Mammary epithelial cell (primary cell): ENCODE measurements at regions of chr5 and their contacts with region 1.

Region 1: GRCh38 chr5:159163027-159163700 is 46.2 kb downstream of the RNF145 start:
- DNase-seq: peak; percentile 97
- H3K4me3 ChIP-seq: no peak overlapping the region
- H3K27ac ChIP-seq: peak overlapping the region; percentile 85
- H3K4me1 ChIP-seq: peaks cover 19% of the 10 kb centered on the region
- H3K27me3 ChIP-seq: no peaks in the 10 kb centered on the region
- CTCF ChIP-seq: no peak

Region 2: DNA sequence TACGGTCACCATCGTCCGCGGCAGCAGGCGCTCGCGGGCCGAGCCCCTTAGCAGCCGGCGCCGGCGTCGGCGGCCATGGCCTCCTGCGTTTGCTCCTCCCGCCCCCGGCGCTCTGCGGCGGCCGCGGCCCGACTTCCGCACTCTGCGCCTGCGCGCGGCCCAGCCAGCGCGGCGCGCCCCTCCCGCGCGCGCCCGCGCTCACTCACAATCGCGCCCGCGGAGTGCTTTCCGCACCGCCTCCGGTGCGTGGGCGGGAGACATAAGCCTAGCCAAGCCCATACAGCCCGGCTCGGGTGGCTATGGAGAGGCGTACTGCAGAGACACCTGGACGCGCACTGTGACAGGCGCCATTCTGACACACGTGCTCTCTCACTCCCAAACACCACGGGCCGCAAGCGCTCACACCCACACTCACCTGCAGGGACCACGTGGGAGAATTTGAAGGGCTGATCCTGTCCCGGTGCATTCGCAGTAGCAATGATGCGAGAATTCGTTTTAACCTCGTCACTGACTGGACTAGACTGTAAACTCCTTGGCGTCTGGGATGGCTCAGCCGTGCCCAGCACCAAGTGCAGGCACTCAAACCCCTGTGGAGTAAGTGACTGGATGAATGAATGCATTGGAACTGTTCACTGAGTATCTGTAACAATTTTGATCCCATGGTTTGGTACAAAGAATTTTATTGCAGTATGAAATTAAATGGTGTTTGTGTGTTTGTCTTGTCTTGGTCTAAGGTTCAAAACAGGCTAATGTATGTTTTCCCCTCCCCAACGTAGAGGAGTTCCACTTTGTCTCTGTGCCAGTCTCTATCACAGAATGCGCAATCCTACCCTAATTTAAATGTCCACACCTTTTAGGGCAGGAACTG is 46.5 kb after region 1 on chr5 and contains the start of gene RNF145:
- CTCF ChIA-PET with region 1: no interaction called
- dilution Hi-C with region 1: no loop called
- in situ Hi-C with region 1: no loop called
- intact Hi-C with region 1: loop called (anchors 1 kb)
- DNase-seq: peak; percentile 91
- H3K4me3 ChIP-seq: peak within 1 kb of the TSS; percentile 77 to 89 (median 79)
- H3K27ac ChIP-seq: peak within 1 kb of the TSS; percentile 90
- H3K4me1 ChIP-seq: peaks cover 20% of the 10 kb centered on the region
- H3K27me3 ChIP-seq: no peaks in the 10 kb centered on the region
- CTCF ChIP-seq: no peak
- total RNA-seq, gene RNF145: 63.2 to 78.9 TPM

Region 3: DNA sequence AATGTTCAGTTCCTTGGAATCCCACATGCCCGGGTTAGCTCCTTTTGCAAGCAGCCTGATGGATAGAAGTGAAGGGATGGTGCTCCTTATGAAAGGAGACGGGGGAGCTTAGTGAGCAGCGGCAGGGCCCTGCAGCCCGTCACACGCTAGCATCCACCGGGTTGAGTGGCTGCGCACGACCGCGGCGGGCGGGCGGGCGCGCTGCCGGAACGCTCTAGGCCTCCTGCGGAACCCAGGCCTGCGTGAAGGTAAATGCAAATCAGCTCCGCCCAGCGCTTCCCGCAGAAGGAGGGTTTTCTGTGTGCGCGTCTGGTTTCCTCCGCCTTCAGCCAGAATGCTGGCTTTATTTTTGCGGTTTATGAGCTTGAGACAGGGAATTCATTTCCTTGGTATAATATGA is 147.3 kb after region 1 on chr5:
- CTCF ChIA-PET with region 1: no interaction called
- dilution Hi-C with region 1: no loop called
- in situ Hi-C with region 1: no loop called
- intact Hi-C with region 1: no loop called
- DNase-seq: peak; percentile 31
- H3K4me3 ChIP-seq: no peak overlapping the region
- H3K27ac ChIP-seq: no peak overlapping the region
- H3K4me1 ChIP-seq: peaks cover 4% of the 10 kb centered on the region
- H3K27me3 ChIP-seq: no peaks in the 10 kb centered on the region
- CTCF ChIP-seq: no peak

Region 4: GRCh38 chr5:159923008-159923407 is 759.8 kb after region 1 on chr5:
- CTCF ChIA-PET with region 1: no interaction called
- dilution Hi-C with region 1: no loop called
- in situ Hi-C with region 1: no loop called
- intact Hi-C with region 1: loop called (anchors 5 kb)
- DNase-seq: no peak
- H3K4me3 ChIP-seq: no peak overlapping the region
- H3K27ac ChIP-seq: no peak overlapping the region
- H3K4me1 ChIP-seq: peaks cover 9% of the 10 kb centered on the region
- H3K27me3 ChIP-seq: no peaks in the 10 kb centered on the region
- CTCF ChIP-seq: no peak